Ovary (tissue), 10 donors: ENCODE measurements at regions of chr21 and their contacts with region 1.

Region 1: DNA sequence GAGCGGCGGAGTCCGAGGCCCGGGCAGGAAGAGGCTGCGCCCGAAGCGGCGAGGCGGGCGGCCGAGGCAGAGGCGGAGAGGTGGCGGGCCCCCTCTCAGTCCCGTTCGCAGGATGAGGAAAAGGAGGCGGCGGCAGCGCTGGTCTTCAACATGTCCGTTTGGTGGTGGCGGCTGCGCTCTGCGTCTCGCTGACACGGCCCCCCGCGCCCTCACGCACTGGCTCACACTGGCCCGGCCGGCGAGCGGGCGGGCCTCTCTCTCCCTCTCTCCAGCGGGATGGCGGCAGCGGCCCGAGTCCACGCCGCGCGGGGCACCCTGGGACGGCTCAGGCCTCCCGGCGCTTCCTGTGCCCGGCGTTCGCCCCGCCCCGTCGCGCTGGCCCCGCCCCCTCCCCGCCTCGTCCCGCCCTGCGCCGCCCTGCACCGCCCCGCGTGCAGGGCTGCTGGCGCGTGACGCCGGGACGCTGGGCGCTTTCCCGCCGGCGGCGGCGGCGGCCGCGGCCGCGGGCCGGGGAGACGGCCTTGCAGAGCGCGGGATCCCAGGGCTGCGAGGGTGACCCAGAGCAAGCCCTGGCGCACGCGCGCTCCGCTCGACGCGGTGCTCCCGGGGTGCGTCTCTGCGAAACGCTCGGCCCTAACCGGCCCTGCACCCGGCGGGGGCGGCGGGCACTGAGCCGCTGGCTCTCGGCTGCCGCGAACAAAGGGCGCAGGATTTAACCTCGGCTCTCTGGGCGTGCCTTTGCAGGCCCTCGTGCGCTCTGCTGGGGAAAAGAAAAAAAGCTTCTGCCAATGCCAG is at the start of gene SCAF4:
- DNase-seq: peak; percentile 86 to 94 (median 90)
- H3K4me3 ChIP-seq: peak within 1 kb of the TSS; percentile 96
- H3K27ac ChIP-seq: peak within 1 kb of the TSS; percentile 88 to 90
- H3K4me1 ChIP-seq: peaks cover 16% of the 10 kb centered on the region
- H3K27me3 ChIP-seq: no peaks in the 10 kb centered on the region
- CTCF ChIP-seq: no peak
- EP300 ChIP-seq: no peak
- POLR2A ChIP-seq: peak; percentile 80
- total RNA-seq, gene SCAF4: 12.2 to 41.7 (median 29.1) TPM

Region 2: GRCh38 chr21:31659536-31660258 is 72.3 kb before region 1 on chr21 and contains the start of gene SOD1:
- intact Hi-C with region 1: loop called in 1 of 4 experiments (anchors 10 kb)
- DNase-seq: peak; percentile 92 to 97 (median 96)
- H3K4me3 ChIP-seq: peak within 1 kb of the TSS; percentile 88
- H3K27ac ChIP-seq: peak within 1 kb of the TSS; percentile 59 to 74
- H3K4me1 ChIP-seq: peaks cover 18% of the 10 kb centered on the region
- H3K27me3 ChIP-seq: no peaks in the 10 kb centered on the region
- CTCF ChIP-seq: peak; percentile 17 to 40 (median 25)
- EP300 ChIP-seq: no peak
- POLR2A ChIP-seq: peak; percentile 79
- total RNA-seq, gene SOD1: 175 to 321 (median 236) TPM

Region 3: DNA sequence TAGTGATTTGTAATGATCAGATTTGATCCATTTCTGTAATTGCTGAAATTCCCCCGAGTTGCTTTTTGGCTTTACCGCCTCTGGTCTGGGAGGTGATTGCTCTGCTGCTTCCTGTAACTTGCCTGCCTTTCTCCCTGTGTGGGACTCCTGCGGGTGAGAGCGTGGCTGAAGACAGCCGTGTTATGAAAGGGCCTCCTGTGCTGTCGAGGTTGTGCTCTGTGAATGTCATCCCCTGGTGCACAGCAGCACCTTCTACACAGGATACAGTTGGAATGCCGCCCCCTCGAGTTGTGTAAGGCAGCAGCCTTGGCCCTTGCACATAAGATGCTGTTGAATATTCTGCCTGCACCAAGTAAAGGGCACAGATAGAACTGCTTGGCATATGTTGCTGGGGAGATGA is 66.6 kb before region 1 on chr21:
- intact Hi-C with region 1: loop called in 2 of 4 experiments (anchors 5 to 10 kb)
- DNase-seq: no peak
- H3K4me3 ChIP-seq: no peak overlapping the region
- H3K27ac ChIP-seq: no peak overlapping the region
- H3K4me1 ChIP-seq: peaks cover 20% of the 10 kb centered on the region
- H3K27me3 ChIP-seq: no peaks in the 10 kb centered on the region
- CTCF ChIP-seq: no peak
- EP300 ChIP-seq: no peak
- POLR2A ChIP-seq: no peak